ENCODE measurements at regions of chr1 and their contacts with region 1.

Region 1: DNA sequence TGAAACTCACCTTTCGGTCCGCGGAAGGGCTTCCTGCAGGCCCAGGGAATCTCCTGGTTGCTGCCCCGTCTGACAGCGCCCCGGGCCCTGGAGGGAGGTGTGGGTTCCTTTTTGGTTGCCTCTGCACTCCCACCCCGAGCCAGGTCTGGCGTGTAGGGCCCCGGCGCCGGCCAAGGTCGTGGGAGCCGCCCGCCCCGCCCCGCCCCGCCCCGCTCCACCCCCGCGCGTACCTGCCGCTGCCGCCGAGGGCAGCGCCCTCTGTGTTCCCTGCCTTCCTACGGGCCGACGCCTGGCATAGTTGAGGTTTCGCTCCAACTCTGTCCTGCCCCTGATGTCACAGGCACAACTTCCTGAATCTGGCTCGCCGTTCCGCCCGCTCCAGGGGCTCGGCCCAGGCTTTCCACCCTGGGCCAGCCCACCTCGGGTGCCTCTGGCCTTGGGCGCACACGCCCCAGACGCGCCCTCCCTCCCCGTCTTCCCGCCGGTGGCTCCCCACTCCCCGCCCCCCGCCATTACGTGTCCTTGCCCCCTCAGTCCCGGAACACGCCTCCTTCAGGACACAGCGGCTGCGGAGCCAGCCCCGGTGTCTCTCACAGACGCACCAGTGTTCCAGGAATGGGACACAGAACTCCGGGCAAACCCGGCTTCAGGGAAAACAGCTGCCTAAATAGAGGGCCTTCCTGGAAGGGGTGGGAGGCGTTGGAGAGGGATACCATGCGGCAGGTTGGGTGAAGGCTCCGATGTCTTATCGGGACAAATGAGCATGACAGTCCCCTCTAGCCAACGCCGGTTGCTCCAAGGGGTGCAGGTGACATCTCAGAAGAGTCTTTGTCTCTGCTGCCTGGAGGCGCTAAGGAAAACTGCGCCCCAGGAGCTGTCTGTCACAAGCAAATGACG is at the start of gene KIAA0040:
- DNase-seq: peak; percentile 85
- H3K4me3 Mint-ChIP-seq: peak within 1 kb of the TSS; percentile 99
- H3K27ac Mint-ChIP-seq: peak within 1 kb of the TSS; percentile 84
- H3K4me1 Mint-ChIP-seq: peaks cover 50% of the 10 kb centered on the region
- H3K27me3 Mint-ChIP-seq: no peaks in the 10 kb centered on the region
- total RNA-seq, gene KIAA0040: 32.6 and 35.4 TPM in 2 replicates

Region 2: DNA sequence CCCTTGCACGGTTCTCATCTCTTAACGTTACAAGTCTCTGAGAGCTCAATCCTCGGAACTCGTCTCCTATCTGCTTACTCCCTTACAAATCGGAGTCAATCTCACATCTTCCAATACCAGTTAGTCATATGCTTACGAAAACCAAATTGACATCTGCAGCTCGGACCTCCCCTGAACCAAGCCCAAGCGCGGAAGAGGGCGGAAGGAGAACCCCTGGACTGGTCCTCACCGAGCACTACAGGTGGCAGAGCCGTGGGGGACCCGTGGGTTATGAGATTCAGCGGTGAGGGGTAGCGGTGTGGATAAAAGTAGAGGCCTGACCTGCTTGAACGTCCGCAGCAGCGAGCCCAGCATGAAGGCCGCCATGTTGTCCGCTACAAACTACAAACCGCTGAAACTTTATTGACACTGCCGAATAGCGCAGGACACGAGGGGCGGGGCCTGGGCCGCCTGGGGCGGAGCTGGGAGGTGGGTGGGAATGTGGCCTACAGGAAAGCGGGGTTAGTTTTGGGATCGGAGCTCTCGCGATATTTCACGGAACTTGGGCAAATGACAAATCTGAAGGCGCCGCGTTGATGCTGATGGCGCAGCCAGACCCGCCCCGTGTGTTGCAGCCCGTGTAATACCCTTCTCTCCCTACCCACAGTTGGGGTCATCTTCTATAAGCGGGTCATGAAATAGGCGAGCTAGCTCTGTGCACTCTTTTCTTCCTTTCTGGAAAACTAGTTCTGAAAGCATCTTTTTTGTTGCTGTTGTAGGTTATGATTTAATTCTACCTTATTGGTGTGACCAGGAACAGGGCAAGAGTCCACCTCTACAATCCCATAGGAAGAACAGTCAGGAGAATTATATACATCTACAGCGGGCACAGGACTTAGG is 169.6 kb before region 1 on chr1 and contains the start of gene MRPS14:
- intact Hi-C with region 1: loop called (anchors 2 kb)
- DNase-seq: peak; percentile 99
- H3K4me3 Mint-ChIP-seq: peak within 1 kb of the TSS; percentile 91
- H3K27ac Mint-ChIP-seq: peak within 1 kb of the TSS; percentile 90
- H3K4me1 Mint-ChIP-seq: peaks cover 23% of the 10 kb centered on the region
- H3K27me3 Mint-ChIP-seq: no peaks in the 10 kb centered on the region
- total RNA-seq, gene MRPS14: 28.9 and 33.5 TPM in 2 replicates

Region 3: DNA sequence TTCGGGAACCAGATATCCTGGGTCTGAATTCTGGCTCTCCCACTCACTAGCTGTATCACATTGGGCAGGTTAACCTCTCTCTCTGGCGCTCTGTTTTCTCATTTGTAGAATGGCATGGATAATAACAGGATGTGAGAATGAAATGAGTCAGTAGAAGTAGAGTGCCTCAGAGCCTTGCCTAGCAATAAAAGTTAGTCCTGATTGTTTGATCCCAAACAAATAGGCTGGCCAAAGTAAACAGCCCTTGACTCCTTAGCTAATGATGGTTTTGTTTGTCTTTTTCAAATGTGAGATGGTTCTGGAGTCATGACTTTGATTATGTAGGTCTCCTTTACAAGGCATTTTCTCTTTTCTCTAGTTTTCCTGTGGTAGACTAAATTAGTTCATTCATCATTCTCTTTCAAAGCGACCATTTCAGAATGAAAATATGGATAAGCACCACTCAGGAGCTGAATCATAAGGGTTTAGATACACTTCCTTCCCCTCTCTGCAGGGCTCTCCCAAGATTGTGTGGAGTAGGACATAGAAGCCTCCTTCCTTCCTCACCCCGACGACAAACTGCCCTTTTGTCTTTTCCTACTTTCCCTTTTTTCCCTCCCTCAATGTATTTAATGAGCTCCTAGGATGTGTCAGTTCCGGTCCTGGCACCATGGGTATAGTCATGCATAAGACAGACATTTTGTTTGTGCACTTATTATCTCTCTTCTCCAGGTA is 23.4 kb before region 1 on chr1:
- intact Hi-C with region 1: loop called (anchors 2 kb)
- DNase-seq: no peak
- H3K4me3 Mint-ChIP-seq: no peak overlapping the region
- H3K27ac Mint-ChIP-seq: peak overlapping the region; percentile 81
- H3K4me1 Mint-ChIP-seq: peaks cover 54% of the 10 kb centered on the region
- H3K27me3 Mint-ChIP-seq: no peaks in the 10 kb centered on the region

Region 4: DNA sequence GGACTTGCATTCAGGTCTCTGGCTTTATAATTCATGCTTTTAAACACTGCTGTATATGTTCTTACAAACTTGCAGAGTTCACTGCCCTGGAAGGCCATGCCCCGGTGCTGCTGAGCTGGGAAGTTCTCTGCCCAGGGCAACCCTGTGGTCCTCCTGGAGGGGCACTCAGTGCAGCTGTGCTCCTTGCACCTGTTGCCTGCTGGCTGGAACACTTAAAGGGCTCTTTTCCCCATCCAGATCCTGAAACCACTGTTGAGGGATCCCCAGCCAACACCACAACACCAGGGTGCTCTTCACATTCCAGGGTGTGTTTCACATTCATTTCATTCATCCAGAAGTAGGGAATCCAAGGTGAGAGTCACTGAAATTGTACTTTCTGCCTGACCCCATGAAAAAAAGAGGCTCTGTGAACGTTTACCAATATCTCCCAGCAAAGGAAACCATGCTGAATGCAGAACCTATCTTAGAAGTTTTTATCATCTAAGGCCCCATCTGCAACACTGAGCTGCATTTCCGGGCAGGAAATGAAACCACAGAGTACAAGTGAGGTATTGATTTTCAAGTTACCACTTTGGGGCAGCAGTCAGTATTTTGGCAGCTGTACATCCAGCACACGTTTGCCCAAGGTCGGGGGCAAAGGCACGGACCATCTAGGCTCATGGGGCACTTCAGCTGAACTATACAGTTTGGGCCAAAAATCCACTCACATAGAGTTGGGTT is 16.1 kb after region 1 on chr1:
- intact Hi-C with region 1: loop called (anchors 1 kb)
- DNase-seq: peak; percentile 90
- H3K4me3 Mint-ChIP-seq: peak overlapping the region; percentile 81
- H3K27ac Mint-ChIP-seq: peak overlapping the region; percentile 94
- H3K4me1 Mint-ChIP-seq: peaks cover 58% of the 10 kb centered on the region
- H3K27me3 Mint-ChIP-seq: no peaks in the 10 kb centered on the region

Region 5: DNA sequence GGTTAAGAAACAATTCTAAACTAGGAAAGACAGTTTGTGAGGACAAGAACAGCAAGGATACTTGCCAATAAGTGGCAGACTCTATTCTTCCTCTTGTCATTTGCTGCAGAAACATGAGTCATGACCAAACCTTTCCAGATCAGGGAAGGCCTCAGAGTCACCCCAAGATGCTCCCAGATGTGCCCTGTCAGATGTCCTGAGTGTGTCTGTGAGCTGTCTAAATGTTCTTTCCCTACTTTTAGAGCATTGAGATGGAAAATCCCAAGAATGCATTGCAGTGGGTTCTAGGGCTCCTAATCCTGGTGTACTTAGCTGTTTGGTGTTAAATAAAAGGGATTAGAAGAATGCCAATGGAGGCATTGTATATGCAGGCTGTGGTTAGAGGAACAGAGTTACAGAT is 57.1 kb after region 1 on chr1:
- intact Hi-C with region 1: no loop called
- DNase-seq: no peak
- H3K4me3 Mint-ChIP-seq: no peak overlapping the region
- H3K27ac Mint-ChIP-seq: no peak overlapping the region
- H3K4me1 Mint-ChIP-seq: no peaks in the 10 kb centered on the region
- H3K27me3 Mint-ChIP-seq: peaks cover 9% of the 10 kb centered on the region

Region 6: GRCh38 chr1:176206961-176207902 is 1014.4 kb after region 1 on chr1 and contains the start of gene COP1:
- intact Hi-C with region 1: loop called (anchors 5 kb)
- DNase-seq: peak; percentile 99
- H3K4me3 Mint-ChIP-seq: peak within 1 kb of the TSS; percentile 97
- H3K27ac Mint-ChIP-seq: peak within 1 kb of the TSS; percentile 97
- H3K4me1 Mint-ChIP-seq: peaks cover 22% of the 10 kb centered on the region
- H3K27me3 Mint-ChIP-seq: peaks cover 1% of the 10 kb centered on the region
- total RNA-seq, gene COP1: 48.6 and 51.4 TPM in 2 replicates

Measured in activated CD4-positive, alpha-beta T cell treated with anti-CD3 and anti-CD28 coated beads, Interleukin-2, amount 10 ng/mL, durations not matched to agents 24 days and 14 days (primary cell).